ENCODE measurements at regions of chr4 and their contacts with region 1.

Region 1: DNA sequence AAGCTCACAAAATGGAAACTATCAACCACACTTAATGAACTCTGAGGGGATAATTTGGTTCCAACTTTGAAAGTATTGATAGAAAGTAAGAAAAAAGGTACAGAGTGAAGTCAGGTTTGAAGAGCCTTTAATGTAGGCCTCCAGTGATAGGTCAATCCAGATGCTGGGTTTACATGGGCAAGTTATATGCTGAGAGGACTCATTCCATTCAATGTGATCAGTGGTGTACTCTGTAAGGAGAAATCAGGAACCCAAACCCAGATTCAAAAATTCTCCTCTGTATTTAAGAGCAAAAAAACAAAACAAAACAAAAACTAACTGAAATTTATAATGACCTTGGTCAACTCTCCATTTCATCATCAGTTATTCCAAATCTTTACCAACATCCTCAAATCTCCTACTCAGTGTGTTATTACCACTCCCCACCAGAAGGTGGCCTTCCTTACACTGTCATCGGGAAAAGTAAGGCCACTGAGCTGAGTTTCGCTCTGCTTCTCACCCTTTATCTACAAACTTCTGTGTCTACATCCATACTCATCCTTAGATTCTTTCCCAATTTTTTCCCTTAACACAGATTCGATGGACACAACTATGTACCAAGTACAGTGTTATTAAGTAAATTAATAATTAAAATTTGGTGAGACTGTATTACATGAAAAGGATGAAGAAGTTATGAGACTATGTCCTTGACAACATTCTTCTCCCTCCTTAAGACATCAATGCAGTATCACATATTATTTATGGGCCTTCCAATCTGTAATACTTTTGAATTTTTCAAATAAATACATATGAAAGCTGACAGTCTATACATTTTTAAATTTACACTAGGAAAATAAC is 88.3 kb downstream of the ZAR1 start:
- DNase-seq: peak; percentile 72
- H3K4me3 ChIP-seq: no peak overlapping the region
- H3K27ac ChIP-seq: no peak overlapping the region
- H3K4me1 ChIP-seq: no peaks in the 10 kb centered on the region
- CTCF ChIP-seq: peak; percentile 96

Region 2: DNA sequence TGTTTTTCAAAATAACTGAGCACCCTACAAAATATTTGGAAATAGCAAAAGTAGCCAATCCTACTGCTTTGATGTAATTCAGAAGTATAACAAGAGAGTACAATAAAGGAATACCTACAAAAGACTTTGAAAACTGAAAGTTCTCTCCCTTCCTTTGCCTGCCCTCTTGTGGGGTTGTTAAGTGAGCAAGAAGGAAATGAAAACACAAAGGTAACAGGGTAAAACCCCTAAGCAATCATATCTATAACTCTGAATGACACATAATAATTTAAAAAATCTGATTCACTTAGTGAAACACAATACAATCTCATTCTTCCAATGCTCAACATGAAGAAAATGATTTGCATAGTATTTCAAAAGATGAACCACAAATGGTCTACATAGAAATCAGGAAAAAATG is 103.5 kb after region 1 on chr4:
- CTCF ChIA-PET with region 1: no interaction called
- POLR2A ChIA-PET with region 1: no interaction called
- intact Hi-C with region 1: loop called (anchors 5 kb)
- DNase-seq: peak; percentile 16
- H3K4me3 ChIP-seq: no peak overlapping the region
- H3K27ac ChIP-seq: no peak overlapping the region
- H3K4me1 ChIP-seq: peaks cover 9% of the 10 kb centered on the region
- CTCF ChIP-seq: peak; percentile 56; the same call in 1 of the 2 replicates

Region 3: GRCh38 chr4:48906206-48907173 is 328.1 kb after region 1 on chr4 and contains the start of gene OCIAD2:
- CTCF ChIA-PET with region 1: no interaction called
- POLR2A ChIA-PET with region 1: interaction called, 3 read pairs
- intact Hi-C with region 1: loop called (anchors 2 kb)
- DNase-seq: peak; percentile 92
- H3K4me3 ChIP-seq: peak within 1 kb of the TSS; percentile 88
- H3K27ac ChIP-seq: peak within 1 kb of the TSS; percentile 36
- H3K4me1 ChIP-seq: peaks cover 28% of the 10 kb centered on the region
- CTCF ChIP-seq: peak; percentile 69
- total RNA-seq, gene OCIAD2: 102 and 125 TPM in 2 replicates

Measured in OCI-LY7 (cell line).